SK-N-SH (cell line): ENCODE measurements at regions of chr7 and their contacts with region 1.

Region 1: GRCh38 chr7:156969972-156970420 is 20.5 kb downstream of the NOM1 start:
- DNase-seq: no peak
- H3K4me3 ChIP-seq: no peak overlapping the region
- H3K27ac ChIP-seq: no peak overlapping the region
- H3K4me1 ChIP-seq: no peaks in the 10 kb centered on the region
- H3K27me3 ChIP-seq: no peaks in the 10 kb centered on the region
- CTCF ChIP-seq: peak; percentile 74
- EP300 ChIP-seq: no peak
- RAD21 ChIP-seq: peak; percentile 56

Region 2: DNA sequence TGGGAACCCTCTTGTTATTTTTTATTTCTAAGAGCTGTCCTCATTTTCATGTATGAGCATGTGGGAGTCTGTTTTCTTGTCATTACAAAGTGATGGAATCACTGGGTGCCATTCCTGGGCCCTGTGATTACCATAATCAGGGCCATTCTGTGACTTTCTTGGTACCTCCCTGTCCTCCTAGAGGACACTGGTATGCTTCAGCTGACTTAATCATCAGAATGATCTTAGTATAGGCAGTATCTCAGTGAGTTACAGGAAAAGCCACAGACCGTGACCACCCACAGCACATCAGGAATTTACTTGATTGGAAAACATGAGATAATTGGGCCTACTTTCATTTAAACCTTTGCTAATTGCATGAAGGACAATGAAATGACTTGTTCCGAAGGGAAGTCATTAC is 13.3 kb before region 1 on chr7:
- CTCF ChIA-PET with region 1: interaction called, 73 read pairs
- POLR2A ChIA-PET with region 1: no interaction called
- DNase-seq: no peak
- H3K4me3 ChIP-seq: no peak overlapping the region
- H3K27ac ChIP-seq: no peak overlapping the region
- H3K4me1 ChIP-seq: peaks cover 5 to 9% of the 10 kb centered on the region in 2 experiments; a peak in 3 of 4 replicates
- H3K27me3 ChIP-seq: no peaks in the 10 kb centered on the region
- CTCF ChIP-seq: no peak
- EP300 ChIP-seq: no peak
- RAD21 ChIP-seq: no peak

Region 3: GRCh38 chr7:157250605-157251228 is 280.7 kb after region 1 on chr7:
- CTCF ChIA-PET with region 1: interaction called, 10 read pairs
- POLR2A ChIA-PET with region 1: no interaction called
- DNase-seq: peak; percentile 78
- H3K4me3 ChIP-seq: no peak overlapping the region
- H3K27ac ChIP-seq: no peak overlapping the region
- H3K4me1 ChIP-seq: no peaks in the 10 kb centered on the region; a peak in 2 of 4 replicates
- H3K27me3 ChIP-seq: no peaks in the 10 kb centered on the region
- CTCF ChIP-seq: peak; percentile 99
- EP300 ChIP-seq: no peak
- RAD21 ChIP-seq: peak; percentile 68